ENCODE measurements at regions of chr4 and their contacts with region 1.

Region 1: DNA sequence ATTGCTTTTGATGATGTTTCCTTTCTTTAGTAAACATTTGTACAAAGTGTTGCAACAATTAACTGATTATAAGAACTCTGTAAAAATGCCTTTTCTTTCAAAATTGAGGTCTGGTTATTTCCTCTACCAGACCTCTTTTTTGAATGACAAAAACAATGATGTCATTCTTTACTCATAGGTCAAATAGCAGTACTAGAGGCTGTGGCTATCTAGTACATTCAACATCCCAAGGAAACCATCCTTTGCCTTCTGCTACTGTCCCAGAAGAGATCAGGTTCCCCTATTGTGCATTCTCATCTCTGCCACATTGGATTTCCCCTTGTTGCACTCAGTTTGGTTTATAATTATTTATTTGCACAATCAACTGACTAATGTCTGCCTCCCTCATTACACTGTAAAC is 19.1 kb upstream of the MAD2L1 start:
- DNase-seq: no peak
- H3K4me3 ChIP-seq: no peak overlapping the region
- H3K4me3 Mint-ChIP-seq: no peak overlapping the region
- H3K27ac ChIP-seq: no peak overlapping the region
- H3K27ac Mint-ChIP-seq: no peak overlapping the region
- H3K4me1 ChIP-seq: no peaks in the 10 kb centered on the region
- H3K4me1 Mint-ChIP-seq: no peaks in the 10 kb centered on the region
- H3K27me3 ChIP-seq: no peaks in the 10 kb centered on the region
- H3K27me3 Mint-ChIP-seq: peaks cover 8 to 17% of the 10 kb centered on the region in 2 donors

Region 2: DNA sequence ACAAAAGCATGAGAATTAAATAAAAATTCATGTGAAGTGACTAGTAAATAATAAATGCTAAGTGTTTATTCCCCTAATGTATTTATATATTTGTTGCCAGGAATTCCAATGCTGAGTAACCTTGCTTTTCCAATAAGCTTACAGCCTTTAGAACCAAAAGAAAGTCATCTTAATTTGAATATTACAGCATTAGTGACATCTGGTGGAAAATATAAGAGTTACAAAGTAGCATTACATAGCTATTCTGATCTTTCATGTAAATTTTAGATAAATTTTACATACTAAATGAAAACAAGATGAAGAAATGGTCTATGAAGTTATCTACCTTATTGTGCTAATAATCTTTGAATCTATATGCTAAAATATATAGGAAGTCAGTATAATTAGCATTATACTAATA is 29.5 kb before region 1 on chr4:
- CTCF ChIA-PET with region 1: no interaction called
- POLR2A ChIA-PET with region 1: no interaction called
- intact Hi-C with region 1: loop called (anchors 1 kb)
- DNase-seq: no peak
- H3K4me3 ChIP-seq: no peak overlapping the region
- H3K4me3 Mint-ChIP-seq: no peak overlapping the region
- H3K27ac ChIP-seq: no peak overlapping the region
- H3K27ac Mint-ChIP-seq: no peak overlapping the region
- H3K4me1 ChIP-seq: no peaks in the 10 kb centered on the region
- H3K4me1 Mint-ChIP-seq: no peaks in the 10 kb centered on the region
- H3K27me3 ChIP-seq: no peaks in the 10 kb centered on the region
- H3K27me3 Mint-ChIP-seq: no peaks in the 10 kb centered on the region

Region 3: GRCh38 chr4:120132935-120133334 is 47.2 kb after region 1 on chr4:
- CTCF ChIA-PET with region 1: no interaction called
- POLR2A ChIA-PET with region 1: no interaction called
- intact Hi-C with region 1: no loop called
- DNase-seq: no peak
- H3K4me3 ChIP-seq: no peak overlapping the region
- H3K4me3 Mint-ChIP-seq: no peak overlapping the region
- H3K27ac ChIP-seq: no peak overlapping the region
- H3K27ac Mint-ChIP-seq: no peak overlapping the region
- H3K4me1 ChIP-seq: no peaks in the 10 kb centered on the region
- H3K4me1 Mint-ChIP-seq: no peaks in the 10 kb centered on the region
- H3K27me3 ChIP-seq: no peaks in the 10 kb centered on the region
- H3K27me3 Mint-ChIP-seq: peaks cover 0 to 2% of the 10 kb centered on the region in 2 donors